ENCODE measurements at regions of chr11 and their contacts with region 1.

Region 1: DNA sequence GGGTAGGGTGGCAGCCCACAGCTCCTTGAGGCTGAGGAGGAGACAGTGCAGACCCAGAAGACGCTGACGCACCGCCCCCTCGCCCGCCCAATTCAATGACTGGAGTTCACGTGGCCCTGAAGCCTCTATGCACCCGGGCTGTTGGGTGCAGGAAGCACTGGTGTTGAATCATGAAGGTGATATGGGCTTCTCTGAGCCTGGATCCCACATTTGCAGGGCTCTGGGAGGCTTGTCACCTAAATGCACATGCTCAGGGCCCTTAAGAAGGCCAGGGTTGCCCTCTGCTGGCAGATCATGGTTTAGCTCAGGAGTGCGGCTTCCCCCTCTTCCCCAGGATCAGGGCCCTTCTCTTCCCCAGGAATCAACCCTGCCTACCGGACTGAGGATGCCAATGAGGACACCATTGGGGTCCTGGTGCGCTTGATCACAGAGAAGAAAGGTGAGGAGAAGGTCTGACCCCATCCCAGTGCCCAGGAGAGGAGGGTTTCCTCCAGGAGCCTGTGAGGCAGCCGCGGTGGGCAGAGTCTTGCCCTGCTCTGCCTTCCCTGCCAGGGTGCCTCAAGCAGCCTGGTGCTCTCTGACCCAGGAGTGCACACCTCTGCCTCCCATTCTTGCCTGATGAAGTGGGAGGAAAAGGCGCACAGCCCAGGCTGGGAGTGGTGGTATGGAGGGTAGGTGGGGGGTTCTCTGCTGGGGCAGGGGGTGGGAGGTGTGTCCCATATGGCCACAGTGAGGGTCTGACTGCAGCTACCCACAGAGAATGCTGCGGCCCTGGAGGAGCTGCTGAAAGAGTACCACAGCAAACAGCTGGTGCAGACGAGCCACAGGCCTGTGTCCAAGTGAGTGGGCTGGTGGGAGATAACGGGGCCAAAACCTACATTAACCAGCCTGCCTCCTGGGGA is 17.5 kb downstream of the RELT start:
- DNase-seq: peak; percentile 52
- ATAC-seq: peak; percentile 82
- H3K4me3 Mint-ChIP-seq: no peak overlapping the region
- H3K27ac Mint-ChIP-seq: peak overlapping the region; percentile 46
- H3K4me1 Mint-ChIP-seq: peaks cover 24% of the 10 kb centered on the region
- H3K27me3 Mint-ChIP-seq: no peaks in the 10 kb centered on the region
- CTCF ChIP-seq: peak; percentile 24

Region 2: DNA sequence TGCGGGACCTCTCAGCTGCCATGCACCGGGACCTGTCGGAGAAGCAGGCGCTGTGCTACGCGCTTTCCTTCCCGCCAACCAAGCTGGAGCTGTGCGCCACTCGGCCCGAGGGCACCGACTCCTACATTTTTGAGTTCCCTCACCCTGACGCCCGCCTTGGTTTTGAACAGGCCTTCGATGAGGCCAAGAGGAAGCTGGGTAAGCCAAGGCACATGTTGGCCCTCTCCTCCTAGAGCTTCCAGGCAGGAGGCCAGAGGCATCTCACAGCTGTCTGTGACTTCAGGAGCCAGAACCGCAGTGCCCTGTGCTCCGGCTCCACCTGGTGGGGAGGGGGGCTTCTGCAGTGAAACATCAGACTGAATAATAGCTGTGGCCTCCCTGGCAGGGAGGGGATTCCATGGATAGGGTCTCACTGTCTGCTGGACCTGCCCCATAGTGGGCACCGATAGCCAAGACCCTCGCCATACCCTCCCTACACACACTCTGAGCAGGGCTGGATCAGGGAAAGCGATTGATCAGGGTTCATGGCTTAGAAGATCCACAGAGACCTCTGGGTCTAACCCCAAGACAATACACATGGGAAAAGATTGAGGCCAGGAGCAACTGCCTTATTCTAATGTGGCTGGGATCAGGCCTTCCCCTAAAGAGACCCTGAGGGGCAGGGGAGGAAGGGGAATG is 33.3 kb before region 1 on chr11:
- CTCF ChIA-PET with region 1: interaction called, 13 read pairs
- POLR2A ChIA-PET with region 1: interaction called, 7 read pairs
- intact Hi-C with region 1: no loop called
- DNase-seq: no peak
- ATAC-seq: peak; percentile 52
- H3K4me3 Mint-ChIP-seq: no peak overlapping the region
- H3K27ac Mint-ChIP-seq: no peak overlapping the region
- H3K4me1 Mint-ChIP-seq: peaks cover 13% of the 10 kb centered on the region
- H3K27me3 Mint-ChIP-seq: no peaks in the 10 kb centered on the region
- CTCF ChIP-seq: no peak

Region 3: DNA sequence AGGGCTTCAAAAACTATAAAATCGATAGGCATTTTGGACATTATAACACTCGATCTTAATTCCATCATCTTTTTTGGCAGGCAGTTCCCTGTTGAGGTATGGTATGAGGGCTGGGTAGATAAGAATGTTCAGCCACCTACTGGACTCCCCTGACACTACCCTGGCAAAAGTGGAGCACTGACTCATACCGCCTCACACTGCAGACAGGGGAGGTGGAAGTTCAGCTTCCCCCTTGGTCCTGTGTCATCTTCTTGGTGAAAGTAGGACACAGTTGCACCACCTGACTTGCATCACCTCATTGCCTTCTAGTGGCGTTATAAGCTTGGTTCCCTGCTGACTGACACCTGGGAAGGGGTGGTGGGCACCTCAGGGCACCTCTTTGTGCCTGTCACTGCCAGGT is 513.5 kb after region 1 on chr11:
- CTCF ChIA-PET with region 1: no interaction called
- POLR2A ChIA-PET with region 1: no interaction called
- intact Hi-C with region 1: no loop called
- DNase-seq: no peak
- ATAC-seq: no peak
- H3K4me3 Mint-ChIP-seq: no peak overlapping the region
- H3K27ac Mint-ChIP-seq: no peak overlapping the region
- H3K4me1 Mint-ChIP-seq: no peaks in the 10 kb centered on the region
- H3K27me3 Mint-ChIP-seq: no peaks in the 10 kb centered on the region
- CTCF ChIP-seq: no peak

Measured in activated B cell treated with CpG ODN at 0.5 μM for 24 hours (primary cell).